Panc1 (cell line): ENCODE measurements at regions of chr12 and their contacts with region 1.

Region 1: DNA sequence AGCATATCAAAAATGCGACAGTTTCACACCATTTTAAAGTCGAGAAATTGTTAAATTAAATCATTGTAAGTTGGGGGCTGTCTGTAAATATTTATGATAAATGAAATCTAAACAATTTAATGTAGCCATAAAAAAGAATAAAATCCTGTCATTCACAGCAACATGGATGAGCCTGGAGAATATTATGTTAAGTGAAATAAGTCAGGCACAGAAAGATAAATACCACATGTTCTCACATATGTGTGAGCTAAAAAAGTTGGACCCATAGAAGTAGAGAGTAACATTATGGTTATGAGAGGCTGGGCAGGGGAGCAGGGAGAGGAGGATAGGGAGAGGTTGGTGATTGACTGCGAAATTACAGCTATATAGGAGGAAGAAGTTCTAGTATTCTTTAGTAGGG is 135.9 kb downstream of the GARIN6 start:
- DNase-seq: no peak
- ATAC-seq: no peak
- H3K4me3 ChIP-seq: no peak overlapping the region
- H3K27ac ChIP-seq: no peak overlapping the region
- H3K4me1 ChIP-seq: no peaks in the 10 kb centered on the region
- H3K27me3 ChIP-seq: no peaks in the 10 kb centered on the region
- CTCF ChIP-seq: no peak

Region 2: DNA sequence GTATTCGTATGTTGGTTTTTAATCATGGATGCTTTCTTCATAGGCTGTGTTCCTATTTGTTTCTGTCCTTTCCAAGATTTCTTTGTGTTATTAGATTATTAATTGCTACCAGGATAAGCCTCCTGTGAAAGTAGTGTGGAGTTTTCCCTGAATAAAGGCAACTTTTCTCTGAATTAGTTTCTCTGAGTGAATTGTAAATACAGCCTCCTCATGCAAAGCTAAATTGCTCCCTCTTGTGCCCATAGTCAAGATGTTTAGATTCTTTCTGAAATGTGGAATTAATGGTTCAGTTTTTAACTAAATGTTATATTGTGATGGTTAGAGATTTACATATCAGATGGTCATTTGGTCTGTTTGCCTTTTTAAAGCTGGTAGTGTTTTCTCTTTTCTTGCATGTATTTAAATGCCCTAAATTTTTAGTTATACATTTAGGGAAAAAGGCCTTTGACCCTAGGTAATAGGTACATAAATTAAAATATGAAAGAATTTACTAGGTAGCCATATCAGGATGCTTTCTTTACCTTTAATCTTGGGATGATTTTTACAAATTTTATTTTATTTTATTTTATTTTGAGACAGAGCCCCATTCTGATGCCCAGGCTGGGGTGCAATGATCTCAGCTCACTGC is 1129.4 kb before region 1 on chr12:
- CTCF ChIA-PET with region 1: no interaction called
- POLR2A ChIA-PET with region 1: no interaction called
- in situ Hi-C with region 1: no loop called
- intact Hi-C with region 1: no loop called
- DNase-seq: no peak
- ATAC-seq: peak; percentile 69
- H3K4me3 ChIP-seq: no peak overlapping the region
- H3K27ac ChIP-seq: no peak overlapping the region
- H3K4me1 ChIP-seq: no peaks in the 10 kb centered on the region
- H3K27me3 ChIP-seq: no peaks in the 10 kb centered on the region
- CTCF ChIP-seq: peak; percentile 63; the same call in 1 of the 2 replicates

Region 3: GRCh38 chr12:99847954-99848353 is 64.5 kb after region 1 on chr12:
- CTCF ChIA-PET with region 1: no interaction called
- POLR2A ChIA-PET with region 1: interaction called, 15 read pairs
- in situ Hi-C with region 1: no loop called
- intact Hi-C with region 1: no loop called
- DNase-seq: no peak
- ATAC-seq: no peak
- H3K4me3 ChIP-seq: no peak overlapping the region
- H3K27ac ChIP-seq: no peak overlapping the region
- H3K4me1 ChIP-seq: no peaks in the 10 kb centered on the region
- H3K27me3 ChIP-seq: no peaks in the 10 kb centered on the region
- CTCF ChIP-seq: no peak